ENCODE measurements at regions of chr21 and their contacts with region 1.

Region 1: GRCh38 chr21:32813265-32813903 is 41.8 kb upstream of the PAXBP1 start:
- DNase-seq: no peak
- ATAC-seq: no peak
- H3K4me3 ChIP-seq: no peak overlapping the region
- H3K4me3 Mint-ChIP-seq: no peak overlapping the region
- H3K27ac ChIP-seq: no peak overlapping the region
- H3K27ac Mint-ChIP-seq: no peak overlapping the region
- H3K4me1 ChIP-seq: no peaks in the 10 kb centered on the region
- H3K4me1 Mint-ChIP-seq: no peaks in the 10 kb centered on the region
- H3K27me3 ChIP-seq: no peaks in the 10 kb centered on the region
- H3K27me3 Mint-ChIP-seq: peaks cover 0 to 2% of the 10 kb centered on the region in 2 donors
- CTCF ChIP-seq: no peak

Region 2: GRCh38 chr21:32334980-32335531 is 478.3 kb before region 1 on chr21:
- intact Hi-C with region 1: loop called (anchors 5 kb)
- DNase-seq: no peak
- ATAC-seq: no peak
- H3K4me3 ChIP-seq: no peak overlapping the region
- H3K4me3 Mint-ChIP-seq: no peak overlapping the region
- H3K27ac ChIP-seq: no peak overlapping the region
- H3K27ac Mint-ChIP-seq: no peak overlapping the region
- H3K4me1 ChIP-seq: no peaks in the 10 kb centered on the region
- H3K4me1 Mint-ChIP-seq: peaks cover 0 to 9% of the 10 kb centered on the region in 2 donors
- H3K27me3 ChIP-seq: no peaks in the 10 kb centered on the region
- H3K27me3 Mint-ChIP-seq: no peaks in the 10 kb centered on the region
- CTCF ChIP-seq: no peak

Region 3: GRCh38 chr21:32858628-32859027 is 45.2 kb after region 1 on chr21:
- intact Hi-C with region 1: no loop called
- DNase-seq: no peak
- ATAC-seq: no peak
- H3K4me3 ChIP-seq: no peak overlapping the region
- H3K4me3 Mint-ChIP-seq: no peak overlapping the region
- H3K27ac ChIP-seq: no peak overlapping the region
- H3K27ac Mint-ChIP-seq: no peak overlapping the region
- H3K4me1 ChIP-seq: no peaks in the 10 kb centered on the region
- H3K4me1 Mint-ChIP-seq: no peaks in the 10 kb centered on the region
- H3K27me3 ChIP-seq: peaks cover 2% of the 10 kb centered on the region
- H3K27me3 Mint-ChIP-seq: peaks cover 15 to 19% of the 10 kb centered on the region in 2 donors
- CTCF ChIP-seq: no peak